CD8-positive, alpha-beta T cell (primary cell): ENCODE measurements at regions of chr12 and their contacts with region 1.

Region 1: DNA sequence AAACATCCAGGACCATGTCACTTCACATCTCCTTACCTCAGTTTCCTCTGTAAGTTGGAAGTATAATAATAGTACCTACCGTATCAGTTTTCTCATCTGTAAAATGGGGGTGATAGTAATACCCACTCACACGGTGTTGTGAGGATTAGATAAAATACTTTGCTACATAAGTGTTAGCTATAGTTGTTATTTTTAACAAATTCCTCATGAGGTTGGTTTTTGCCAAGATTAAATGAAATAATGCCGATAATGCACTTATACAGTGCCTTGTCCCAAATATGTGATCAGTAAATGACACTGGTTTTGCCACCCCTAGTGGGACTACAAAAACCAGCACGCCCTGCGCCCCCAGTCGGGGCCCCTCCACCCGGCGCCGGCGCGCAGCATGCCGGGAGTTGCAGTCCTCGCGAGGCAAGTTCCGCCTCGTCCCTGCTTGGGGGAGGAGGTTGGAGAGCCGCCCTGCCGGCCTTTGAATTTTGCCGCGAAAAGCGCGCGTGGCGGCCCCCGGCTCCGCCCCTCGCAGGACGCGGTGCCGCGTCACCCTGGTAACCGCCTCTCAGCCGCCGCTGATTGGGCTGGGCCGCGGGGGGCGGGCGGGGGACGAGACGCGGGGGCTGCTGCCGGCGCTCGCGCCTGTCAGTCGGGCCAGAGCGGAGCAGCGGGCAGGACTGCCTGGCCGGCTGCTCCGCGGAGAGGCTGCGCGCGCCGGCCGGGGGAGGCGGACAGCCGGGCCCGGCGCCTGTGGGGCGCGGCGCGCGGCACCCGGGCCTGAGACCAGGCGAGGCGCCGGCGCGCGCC is at the start of gene FAM222A:
- DNase-seq: peak; percentile 95 to 99 (median 98)
- ATAC-seq: peak; percentile 88
- H3K4me3 ChIP-seq: peak within 1 kb of the TSS; percentile 54 to 55
- H3K4me3 Mint-ChIP-seq: peak within 1 kb of the TSS; percentile 81
- H3K27ac ChIP-seq: no peak within 1 kb of the TSS
- H3K27ac Mint-ChIP-seq: no peak within 1 kb of the TSS
- H3K4me1 ChIP-seq: peaks cover 11% of the 10 kb centered on the region
- H3K4me1 Mint-ChIP-seq: no peaks in the 10 kb centered on the region
- H3K27me3 ChIP-seq: peaks cover 0 to 3% of the 10 kb centered on the region in 2 experiments
- H3K27me3 Mint-ChIP-seq: peaks cover 40% of the 10 kb centered on the region
- CTCF ChIP-seq: no peak
- total RNA-seq, gene FAM222A: 4.4 to 5.3 TPM

Region 2: DNA sequence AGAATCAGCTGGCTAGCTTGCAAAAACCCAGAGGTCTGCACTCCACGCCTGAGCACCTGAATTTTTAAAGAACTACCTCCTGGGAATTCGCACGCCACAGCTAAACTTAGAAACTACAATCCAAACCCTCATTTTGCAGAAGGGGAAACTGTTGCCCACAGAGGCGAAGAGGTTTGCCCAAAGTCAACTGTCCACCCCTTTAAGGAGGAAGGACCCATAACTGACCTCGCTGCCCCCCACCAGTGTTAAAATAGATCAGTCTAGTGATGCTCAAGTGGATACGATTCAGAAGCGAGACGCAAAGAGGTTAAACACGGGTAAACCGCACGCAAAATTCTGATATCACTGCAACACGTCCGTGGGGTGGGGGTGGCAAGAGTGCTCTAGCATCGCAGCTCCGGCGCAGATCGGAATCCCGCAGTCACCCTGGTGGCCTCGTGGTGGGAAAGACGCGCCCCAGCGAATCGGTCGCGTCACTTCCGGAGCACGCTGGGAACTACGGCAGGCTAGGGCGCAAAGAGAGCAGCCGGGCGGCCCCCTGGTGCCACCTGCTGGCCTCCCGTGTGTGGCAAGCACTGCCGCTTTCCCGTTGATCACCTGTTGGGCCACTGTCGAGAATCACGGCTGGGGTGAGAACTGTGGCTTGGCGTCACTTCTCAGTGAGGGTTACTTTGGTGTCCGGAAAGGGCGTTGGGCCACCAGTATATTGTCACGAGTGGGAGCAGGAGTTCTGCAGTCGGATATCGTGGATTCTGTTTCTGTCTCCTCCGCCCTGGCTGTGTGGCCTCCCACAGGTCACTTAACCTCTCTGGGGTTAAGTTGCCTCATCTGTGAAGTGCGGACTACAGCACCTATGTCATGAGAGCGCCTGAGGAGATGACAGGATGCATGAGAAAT is 620.1 kb before region 1 on chr12 and contains the start of gene ALKBH2:
- CTCF ChIA-PET with region 1: no interaction called
- POLR2A ChIA-PET with region 1: no interaction called
- intact Hi-C with region 1: loop called in 1 of 2 experiments (anchors 10 kb)
- DNase-seq: peak; percentile 89 to 99 (median 95)
- ATAC-seq: peak; percentile 77
- H3K4me3 ChIP-seq: peak within 1 kb of the TSS; percentile 63 to 78
- H3K4me3 Mint-ChIP-seq: peak within 1 kb of the TSS; percentile 83
- H3K27ac ChIP-seq: peak within 1 kb of the TSS; percentile 65 to 69
- H3K27ac Mint-ChIP-seq: peak within 1 kb of the TSS; percentile 91
- H3K4me1 ChIP-seq: peaks cover 27% of the 10 kb centered on the region
- H3K4me1 Mint-ChIP-seq: peaks cover 40% of the 10 kb centered on the region
- H3K27me3 ChIP-seq: no peaks in the 10 kb centered on the region
- H3K27me3 Mint-ChIP-seq: no peaks in the 10 kb centered on the region
- CTCF ChIP-seq: peak; percentile 94
- total RNA-seq, gene ALKBH2: 9.8 to 12.8 TPM

Region 3: DNA sequence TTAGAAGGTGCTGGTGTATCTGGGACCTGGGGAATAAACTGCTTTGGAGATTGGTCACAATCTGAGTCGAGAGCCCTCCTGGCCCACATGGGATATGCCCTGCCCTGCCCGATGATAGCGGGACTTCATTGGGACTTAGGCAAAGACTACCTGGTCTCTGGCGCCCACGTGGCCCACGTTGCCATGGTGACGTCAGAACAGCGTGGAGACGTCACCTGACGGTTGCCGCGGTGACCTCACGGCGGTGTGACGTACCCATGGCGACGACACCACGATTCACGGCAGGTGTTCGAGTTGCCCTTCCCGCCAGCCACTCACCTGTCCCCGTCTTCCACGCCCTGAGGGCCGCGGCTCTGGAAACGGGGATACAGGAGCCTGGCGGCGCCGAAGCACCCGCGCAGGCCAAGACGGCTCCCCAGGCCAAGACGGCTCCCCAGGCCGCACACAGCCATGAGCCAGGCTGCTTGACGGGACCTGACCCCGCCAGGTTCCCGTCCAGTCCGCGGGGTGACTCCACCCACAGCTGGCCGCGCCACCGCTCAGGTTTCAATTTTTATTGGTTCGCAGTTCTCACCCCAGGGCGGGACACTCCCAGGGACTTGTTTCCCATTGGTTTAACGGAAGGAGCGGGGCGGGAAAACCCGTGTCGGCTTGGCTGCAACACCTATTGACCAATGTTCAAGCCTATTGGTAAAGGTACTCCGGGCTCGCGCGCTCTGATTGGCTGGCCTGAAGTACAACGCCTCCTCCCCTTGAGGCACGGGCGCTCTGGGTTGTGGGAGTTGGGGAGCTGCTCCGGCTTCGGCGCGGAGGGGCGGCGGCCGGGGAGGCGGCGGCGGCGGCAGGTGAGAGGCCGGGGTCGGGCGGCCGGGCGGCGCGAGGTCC is 140.1 kb before region 1 on chr12 and contains the starts of genes MMAB and MVK:
- CTCF ChIA-PET with region 1: no interaction called
- POLR2A ChIA-PET with region 1: interaction called, 3 read pairs
- intact Hi-C with region 1: loop called (anchors 1 kb)
- DNase-seq: peak; percentile 96 to 99 (median 98)
- ATAC-seq: peak; percentile 92
- H3K4me3 ChIP-seq: peak within 1 kb of the TSS; percentile 73 to 82
- H3K4me3 Mint-ChIP-seq: peak within 1 kb of the TSS; percentile 95
- H3K27ac ChIP-seq: peak within 1 kb of the TSS; percentile 95
- H3K27ac Mint-ChIP-seq: peak within 1 kb of the TSS; percentile 96
- H3K4me1 ChIP-seq: peaks cover 16% of the 10 kb centered on the region
- H3K4me1 Mint-ChIP-seq: peaks cover 35% of the 10 kb centered on the region
- H3K27me3 ChIP-seq: no peaks in the 10 kb centered on the region
- H3K27me3 Mint-ChIP-seq: no peaks in the 10 kb centered on the region
- CTCF ChIP-seq: no peak
- total RNA-seq, gene MMAB: 10.2 to 11.7 TPM
- total RNA-seq, gene MVK: 11.5 to 13.9 TPM

Region 4: GRCh38 chr12:109899783-109900751 is 186.7 kb after region 1 on chr12 and contains the start of gene TCHP:
- CTCF ChIA-PET with region 1: no interaction called
- POLR2A ChIA-PET with region 1: no interaction called
- intact Hi-C with region 1: loop called in 1 of 2 experiments (anchors 5 kb)
- DNase-seq: peak; percentile 35 to 91 (median 72)
- ATAC-seq: peak; percentile 90
- H3K4me3 ChIP-seq: peak within 1 kb of the TSS; percentile 79 to 86
- H3K4me3 Mint-ChIP-seq: peak within 1 kb of the TSS; percentile 95
- H3K27ac ChIP-seq: peak within 1 kb of the TSS; percentile 65 to 69
- H3K27ac Mint-ChIP-seq: peak within 1 kb of the TSS; percentile 97
- H3K4me1 ChIP-seq: peaks cover 17% of the 10 kb centered on the region
- H3K4me1 Mint-ChIP-seq: peaks cover 28% of the 10 kb centered on the region
- H3K27me3 ChIP-seq: no peaks in the 10 kb centered on the region
- H3K27me3 Mint-ChIP-seq: no peaks in the 10 kb centered on the region
- CTCF ChIP-seq: no peak
- total RNA-seq, gene TCHP: 11.4 to 15.7 TPM

Region 5: DNA sequence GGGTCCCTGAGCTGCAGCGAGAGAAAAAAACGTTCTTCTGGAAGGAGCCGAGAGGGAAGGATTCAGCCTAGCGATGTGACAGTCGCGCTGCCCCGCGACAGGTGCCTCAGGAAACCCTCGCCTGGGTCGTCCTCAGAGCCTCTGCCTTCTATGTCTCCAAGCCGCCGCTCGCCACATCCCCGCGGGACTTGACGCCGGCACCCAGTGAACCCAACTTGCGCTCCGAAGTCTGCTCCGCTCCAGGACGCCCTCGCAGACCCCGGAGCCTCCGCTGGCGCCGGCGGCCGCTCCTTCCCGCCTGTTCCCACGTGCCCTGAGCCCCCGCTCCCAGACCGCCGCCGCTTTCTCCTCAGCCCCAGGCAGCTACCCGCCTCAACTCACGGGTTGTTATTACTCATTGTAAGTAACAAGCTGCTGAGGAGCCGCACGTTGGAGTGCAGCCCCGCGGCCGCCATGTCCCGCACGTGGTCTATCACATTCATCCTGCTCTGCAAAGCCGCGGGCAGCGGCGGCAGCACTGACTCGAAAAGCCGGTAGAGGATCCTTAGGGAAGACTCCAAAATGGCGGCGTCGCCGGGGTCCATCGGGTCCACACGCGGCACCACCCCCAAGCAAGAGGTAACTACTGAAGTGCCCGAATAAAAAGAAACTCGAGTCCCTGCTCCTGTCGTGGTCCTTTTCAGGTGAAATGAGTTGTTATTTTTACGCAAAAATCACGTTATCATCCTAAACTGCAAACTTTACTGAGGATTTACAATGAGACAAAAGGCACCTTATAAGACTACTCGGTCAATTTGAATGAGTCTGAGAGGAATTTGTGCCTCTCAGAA is 690.0 kb after region 1 on chr12 and contains the start of gene ANAPC7:
- CTCF ChIA-PET with region 1: no interaction called
- POLR2A ChIA-PET with region 1: no interaction called
- intact Hi-C with region 1: loop called (anchors 5 to 10 kb)
- DNase-seq: peak; percentile 69 to 93 (median 87)
- ATAC-seq: peak; percentile 96
- H3K4me3 ChIP-seq: peak within 1 kb of the TSS; percentile 87 to 89
- H3K4me3 Mint-ChIP-seq: peak within 1 kb of the TSS; percentile 100
- H3K27ac ChIP-seq: peak within 1 kb of the TSS; percentile 78 to 96
- H3K27ac Mint-ChIP-seq: peak within 1 kb of the TSS; percentile 98
- H3K4me1 ChIP-seq: peaks cover 20% of the 10 kb centered on the region
- H3K4me1 Mint-ChIP-seq: peaks cover 33% of the 10 kb centered on the region
- H3K27me3 ChIP-seq: no peaks in the 10 kb centered on the region
- H3K27me3 Mint-ChIP-seq: no peaks in the 10 kb centered on the region
- CTCF ChIP-seq: no peak
- total RNA-seq, gene ANAPC7: 22.1 to 23.2 TPM

Region 6: GRCh38 chr12:111685744-111686517 is 1972.5 kb after region 1 on chr12 and contains the starts of genes ACAD10 and BRAP:
- CTCF ChIA-PET with region 1: no interaction called
- POLR2A ChIA-PET with region 1: no interaction called
- intact Hi-C with region 1: loop called in 1 of 2 experiments (anchors 5 kb)
- DNase-seq: peak; percentile 89 to 97 (median 94)
- ATAC-seq: peak; percentile 92
- H3K4me3 ChIP-seq: peak within 1 kb of the TSS; percentile 77 to 95
- H3K4me3 Mint-ChIP-seq: peak within 1 kb of the TSS; percentile 95
- H3K27ac ChIP-seq: peak within 1 kb of the TSS; percentile 82 to 92
- H3K27ac Mint-ChIP-seq: peak within 1 kb of the TSS; percentile 95
- H3K4me1 ChIP-seq: peaks cover 27% of the 10 kb centered on the region
- H3K4me1 Mint-ChIP-seq: peaks cover 39% of the 10 kb centered on the region
- H3K27me3 ChIP-seq: no peaks in the 10 kb centered on the region
- H3K27me3 Mint-ChIP-seq: no peaks in the 10 kb centered on the region
- CTCF ChIP-seq: no peak
- total RNA-seq, gene ACAD10: 12.3 to 13.6 TPM
- total RNA-seq, gene BRAP: 29.3 to 30.4 TPM